CD4-positive, alpha-beta memory T cell (primary cell): ENCODE measurements at regions of chr9 and their contacts with region 1.

Region 1: GRCh38 chr9:94672811-94673487 is 33.6 kb upstream of the FBP1 start:
- DNase-seq: no peak
- H3K4me3 ChIP-seq: no peak overlapping the region
- H3K4me3 Mint-ChIP-seq: no peak overlapping the region
- H3K27ac ChIP-seq: no peak overlapping the region
- H3K27ac Mint-ChIP-seq: no peak overlapping the region
- H3K4me1 ChIP-seq: no peaks in the 10 kb centered on the region
- H3K4me1 Mint-ChIP-seq: peaks cover 4 to 9% (median 6%) of the 10 kb centered on the region in 4 donors
- H3K27me3 ChIP-seq: no peaks in the 10 kb centered on the region
- H3K27me3 Mint-ChIP-seq: no peaks in the 10 kb centered on the region

Region 2: DNA sequence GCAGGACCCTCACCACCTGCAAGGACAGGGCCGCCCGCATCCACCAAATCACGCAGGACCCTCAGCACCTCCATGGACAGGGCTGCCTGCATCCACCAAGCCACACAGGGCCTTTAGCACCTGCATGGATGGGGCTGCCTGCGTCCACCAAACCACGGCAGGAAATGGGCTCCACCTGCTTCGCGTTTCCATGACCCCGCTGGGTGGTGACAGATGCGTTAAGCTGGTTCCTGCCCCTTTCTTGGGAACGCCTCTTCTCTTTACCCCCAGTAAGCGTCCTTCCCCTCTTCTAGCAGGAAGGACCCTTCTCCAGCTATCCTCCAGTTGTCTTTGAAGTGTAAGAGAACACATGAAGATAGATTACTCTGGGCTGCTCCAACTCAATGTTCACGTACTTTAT is 47.1 kb before region 1 on chr9:
- CTCF ChIA-PET with region 1: no interaction called
- POLR2A ChIA-PET with region 1: no interaction called
- intact Hi-C with region 1: no loop called
- DNase-seq: no peak
- H3K4me3 ChIP-seq: no peak overlapping the region
- H3K4me3 Mint-ChIP-seq: no peak overlapping the region
- H3K27ac ChIP-seq: no peak overlapping the region
- H3K27ac Mint-ChIP-seq: no peak overlapping the region
- H3K4me1 ChIP-seq: peaks cover 4% of the 10 kb centered on the region
- H3K4me1 Mint-ChIP-seq: peaks cover 0 to 8% (median 3%) of the 10 kb centered on the region in 4 donors
- H3K27me3 ChIP-seq: no peaks in the 10 kb centered on the region
- H3K27me3 Mint-ChIP-seq: no peaks in the 10 kb centered on the region

Region 3: GRCh38 chr9:94639061-94639998 is 33.6 kb before region 1 on chr9 and contains the start of gene FBP1:
- CTCF ChIA-PET with region 1: interaction called, 15 read pairs
- POLR2A ChIA-PET with region 1: interaction called, 3 read pairs
- intact Hi-C with region 1: no loop called
- DNase-seq: peak in 4 of 5 donors; percentile 16 to 20 (median 17)
- H3K4me3 ChIP-seq: peak within 1 kb of the TSS; percentile 42 to 69
- H3K4me3 Mint-ChIP-seq: peak within 1 kb of the TSS; percentile 92 to 98 (median 97)
- H3K27ac ChIP-seq: peak within 1 kb of the TSS; percentile 30
- H3K27ac Mint-ChIP-seq: peak within 1 kb of the TSS; percentile 32 to 93 (median 85)
- H3K4me1 ChIP-seq: peaks cover 11% of the 10 kb centered on the region
- H3K4me1 Mint-ChIP-seq: peaks cover 8 to 18% (median 14%) of the 10 kb centered on the region in 4 donors
- H3K27me3 ChIP-seq: no peaks in the 10 kb centered on the region
- H3K27me3 Mint-ChIP-seq: peaks cover 4 to 5% of the 10 kb centered on the region in 2 donors
- total RNA-seq, gene FBP1: 6.3 to 9.2 TPM

Region 4: GRCh38 chr9:94656200-94656599 is 16.7 kb before region 1 on chr9:
- CTCF ChIA-PET with region 1: interaction called, 15 read pairs
- POLR2A ChIA-PET with region 1: interaction called, 4 read pairs
- intact Hi-C with region 1: no loop called
- DNase-seq: peak in 4 of 5 donors; percentile 29 to 55 (median 38)
- H3K4me3 ChIP-seq: peak overlapping the region; percentile 9 to 10
- H3K4me3 Mint-ChIP-seq: peak overlapping the region; percentile 46 to 91 (median 76)
- H3K27ac ChIP-seq: no peak overlapping the region
- H3K27ac Mint-ChIP-seq: peak overlapping the region in 6 of 7 donors; percentile 24 to 82 (median 76)
- H3K4me1 ChIP-seq: peaks cover 13% of the 10 kb centered on the region
- H3K4me1 Mint-ChIP-seq: peaks cover 9 to 17% (median 14%) of the 10 kb centered on the region in 4 donors
- H3K27me3 ChIP-seq: no peaks in the 10 kb centered on the region
- H3K27me3 Mint-ChIP-seq: peaks cover 0 to 2% of the 10 kb centered on the region in 2 donors

Region 5: GRCh38 chr9:95167998-95168397 is 495.0 kb after region 1 on chr9:
- CTCF ChIA-PET with region 1: interaction called, 14 read pairs
- POLR2A ChIA-PET with region 1: no interaction called
- intact Hi-C with region 1: loop called (anchors 2 kb)
- DNase-seq: peak; percentile 42 to 62 (median 49)
- H3K4me3 ChIP-seq: no peak overlapping the region
- H3K4me3 Mint-ChIP-seq: peak overlapping the region in 3 of 8 donors; percentile 2 to 47 (median 16)
- H3K27ac ChIP-seq: no peak overlapping the region
- H3K27ac Mint-ChIP-seq: peak overlapping the region in 1 of 7 donors; percentile 68
- H3K4me1 ChIP-seq: no peaks in the 10 kb centered on the region
- H3K4me1 Mint-ChIP-seq: peaks cover 0 to 5% (median 3%) of the 10 kb centered on the region in 4 donors
- H3K27me3 ChIP-seq: no peaks in the 10 kb centered on the region
- H3K27me3 Mint-ChIP-seq: no peaks in the 10 kb centered on the region